ENCODE measurements at regions of chr12 and their contacts with region 1.

Region 1: DNA sequence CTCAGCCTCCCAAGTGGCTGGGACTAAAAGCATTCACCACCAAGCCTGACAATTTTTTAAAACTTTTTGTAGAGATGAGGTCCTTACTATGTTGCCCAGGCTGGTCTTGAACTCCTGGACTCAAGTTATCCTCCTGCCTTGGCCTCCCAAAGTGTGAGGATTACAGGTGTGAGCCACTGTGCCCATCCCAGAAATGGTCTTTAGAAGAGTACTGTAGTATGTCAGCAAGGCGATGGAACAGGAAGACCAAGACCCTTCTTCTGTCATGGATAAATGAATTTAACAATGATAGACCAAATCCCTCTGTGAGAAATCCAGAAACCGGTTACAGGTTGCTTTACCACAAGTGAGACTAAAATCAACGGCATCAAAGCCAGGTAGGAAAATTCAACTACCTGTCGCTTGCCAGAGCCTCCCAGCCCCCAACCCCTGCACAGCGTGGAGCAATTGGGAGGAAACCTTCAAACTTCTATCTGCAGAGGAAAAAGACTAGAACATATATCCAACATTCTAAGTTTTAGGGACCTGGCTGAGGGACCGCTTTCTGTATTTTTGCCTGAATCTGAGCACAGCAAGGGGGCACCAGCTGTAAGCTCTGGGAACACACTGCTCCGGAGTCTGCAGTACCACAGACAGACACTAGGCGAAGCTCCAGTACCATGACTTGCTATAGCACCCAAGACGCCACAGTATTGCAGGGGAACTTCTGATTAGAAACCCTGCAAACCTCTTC is 51.3 kb downstream of the CPSF6 start:
- DNase-seq: peak; percentile 32
- ATAC-seq: peak; percentile 100
- H3K4me3 ChIP-seq: no peak overlapping the region
- H3K27ac ChIP-seq: no peak overlapping the region
- H3K4me1 ChIP-seq: no peaks in the 10 kb centered on the region
- H3K27me3 ChIP-seq: no peaks in the 10 kb centered on the region
- CTCF ChIP-seq: peak; percentile 97 to 99 (median 99); a peak in 5 of 6 replicates
- EP300 ChIP-seq: no peak
- POLR2A ChIP-seq: no peak
- RAD21 ChIP-seq: peak; percentile 96

Region 2: DNA sequence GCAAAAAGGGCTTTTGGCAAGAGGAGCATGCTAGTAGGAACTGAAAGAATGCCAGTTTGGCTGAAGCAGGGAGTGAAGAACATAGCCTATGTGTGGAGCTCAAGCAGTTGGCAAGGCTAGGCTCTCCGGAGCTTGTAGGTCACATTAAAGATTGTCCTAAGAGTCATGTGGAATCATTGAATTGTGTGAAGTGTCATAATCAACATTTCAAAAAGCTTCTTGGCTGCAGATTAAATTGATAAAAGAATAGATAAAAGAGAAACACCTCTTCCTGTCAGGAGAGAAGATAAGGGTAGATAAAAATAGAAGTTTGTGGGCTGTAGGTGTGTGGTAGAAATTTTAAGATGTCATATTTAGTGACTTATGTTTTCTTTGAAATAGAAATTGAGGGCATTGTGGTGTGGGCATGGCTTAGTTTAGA is 15.2 kb before region 1 on chr12:
- CTCF ChIA-PET with region 1: interaction called, 18 read pairs
- POLR2A ChIA-PET with region 1: no interaction called
- RAD21 ChIA-PET with region 1: no interaction called
- SMC1A ChIA-PET with region 1: no interaction called
- in situ Hi-C with region 1: no loop called
- intact Hi-C with region 1: no loop called
- DNase-seq: no peak
- ATAC-seq: peak; percentile 61
- H3K4me3 ChIP-seq: no peak overlapping the region
- H3K27ac ChIP-seq: no peak overlapping the region
- H3K4me1 ChIP-seq: no peaks in the 10 kb centered on the region
- H3K27me3 ChIP-seq: no peaks in the 10 kb centered on the region
- CTCF ChIP-seq: no peak
- EP300 ChIP-seq: no peak
- POLR2A ChIP-seq: no peak
- RAD21 ChIP-seq: no peak

Region 3: DNA sequence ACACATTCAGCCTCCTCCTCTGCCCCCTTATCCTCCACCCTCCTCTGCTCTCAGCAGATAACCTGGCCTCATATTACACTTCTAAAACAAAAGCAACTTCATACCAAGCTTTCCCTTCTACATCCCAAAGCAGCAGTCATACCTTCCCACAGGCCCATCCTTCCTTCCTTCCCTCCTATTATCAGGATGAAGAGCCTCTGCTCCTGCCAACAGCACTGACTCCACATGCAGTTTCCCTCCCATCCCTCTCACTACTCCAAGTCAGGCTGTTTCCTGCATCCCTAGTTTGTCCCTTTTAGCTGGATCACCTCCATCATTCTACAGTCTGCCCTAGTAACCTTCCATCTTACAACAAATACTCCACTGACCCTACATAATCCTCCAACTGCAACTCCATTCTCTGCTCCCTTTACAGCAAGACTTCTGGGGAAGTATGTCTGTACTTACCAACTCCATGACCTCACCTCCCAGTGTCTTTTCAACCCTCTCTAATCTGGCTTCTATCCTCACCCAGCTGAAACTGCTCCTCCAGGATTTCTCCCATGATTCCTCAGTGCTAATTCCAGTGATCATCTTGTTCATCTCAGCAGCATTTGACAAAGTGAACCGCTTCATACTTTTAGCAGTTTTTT is 64.0 kb after region 1 on chr12:
- CTCF ChIA-PET with region 1: interaction called, 9 read pairs
- POLR2A ChIA-PET with region 1: interaction called, 5 read pairs
- RAD21 ChIA-PET with region 1: interaction called, 5 read pairs
- SMC1A ChIA-PET with region 1: interaction called, 4 read pairs
- in situ Hi-C with region 1: no loop called
- intact Hi-C with region 1: loop called (anchors 2 kb)
- DNase-seq: no peak
- ATAC-seq: no peak
- H3K4me3 ChIP-seq: no peak overlapping the region
- H3K27ac ChIP-seq: no peak overlapping the region
- H3K4me1 ChIP-seq: no peaks in the 10 kb centered on the region; the same call in 1 of the 2 replicates
- H3K27me3 ChIP-seq: no peaks in the 10 kb centered on the region
- CTCF ChIP-seq: no peak
- EP300 ChIP-seq: no peak
- POLR2A ChIP-seq: no peak
- RAD21 ChIP-seq: no peak